CD4-positive, alpha-beta memory T cell (primary cell): ENCODE measurements at regions of chr3 and their contacts with region 1.

Region 1: GRCh38 chr3:153246806-153247205 is 84.8 kb downstream of the RAP2B start:
- DNase-seq: no peak
- H3K4me3 ChIP-seq: no peak overlapping the region
- H3K4me3 Mint-ChIP-seq: no peak overlapping the region
- H3K27ac ChIP-seq: no peak overlapping the region
- H3K27ac Mint-ChIP-seq: no peak overlapping the region
- H3K4me1 ChIP-seq: peaks cover 12% of the 10 kb centered on the region
- H3K4me1 Mint-ChIP-seq: peaks cover 19 to 46% (median 32%) of the 10 kb centered on the region in 4 donors
- H3K27me3 ChIP-seq: no peaks in the 10 kb centered on the region
- H3K27me3 Mint-ChIP-seq: no peaks in the 10 kb centered on the region

Region 2: DNA sequence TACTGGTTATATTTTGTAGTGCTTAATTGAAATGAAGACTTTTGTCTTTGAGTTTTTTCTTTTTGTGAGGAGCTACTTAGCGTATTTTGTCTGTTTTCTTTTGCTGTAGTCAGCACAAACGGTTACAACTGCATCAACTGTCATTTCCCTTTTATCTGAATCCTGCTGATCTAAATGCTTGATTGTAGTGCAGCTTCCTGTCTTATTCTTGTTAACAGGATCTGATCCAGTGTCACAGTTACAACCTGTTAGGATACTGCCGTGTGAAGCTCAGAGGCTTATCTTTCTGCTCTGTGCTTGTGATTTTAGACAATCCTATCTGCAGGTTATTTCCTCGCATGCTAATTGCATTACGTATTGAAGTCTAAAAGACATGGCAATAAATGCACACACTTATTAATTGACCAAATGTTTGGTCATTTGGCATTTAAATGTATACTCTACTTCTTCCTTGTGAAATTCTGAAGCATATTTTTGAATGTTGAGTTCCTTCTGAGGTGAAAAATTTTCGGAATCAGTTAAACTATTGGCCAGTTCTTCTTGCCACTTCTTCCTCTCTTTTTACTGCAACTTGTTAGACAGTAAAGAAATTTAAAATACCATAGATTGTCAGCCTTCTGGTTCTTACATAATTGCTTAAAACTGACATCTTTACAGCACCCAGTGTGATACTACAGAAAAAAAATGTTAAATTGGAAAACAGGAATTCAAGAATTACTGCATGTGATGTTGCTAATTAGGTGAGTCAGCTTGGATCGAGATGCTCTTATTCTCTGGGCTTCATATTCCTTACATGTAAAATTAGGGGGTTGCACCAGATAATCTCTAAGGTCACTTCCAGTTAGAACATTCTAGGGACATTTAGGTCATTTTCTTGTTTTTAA is 809.9 kb before region 1 on chr3:
- CTCF ChIA-PET with region 1: no interaction called
- POLR2A ChIA-PET with region 1: no interaction called
- intact Hi-C with region 1: no loop called
- DNase-seq: no peak
- H3K4me3 ChIP-seq: no peak overlapping the region
- H3K4me3 Mint-ChIP-seq: peak overlapping the region in 7 of 8 donors; percentile 12 to 82 (median 73)
- H3K27ac ChIP-seq: peak overlapping the region; percentile 32
- H3K27ac Mint-ChIP-seq: peak overlapping the region; percentile 42 to 89 (median 79)
- H3K4me1 ChIP-seq: peaks cover 77% of the 10 kb centered on the region
- H3K4me1 Mint-ChIP-seq: peaks cover 56 to 72% (median 64%) of the 10 kb centered on the region in 4 donors
- H3K27me3 ChIP-seq: no peaks in the 10 kb centered on the region
- H3K27me3 Mint-ChIP-seq: no peaks in the 10 kb centered on the region

Region 3: DNA sequence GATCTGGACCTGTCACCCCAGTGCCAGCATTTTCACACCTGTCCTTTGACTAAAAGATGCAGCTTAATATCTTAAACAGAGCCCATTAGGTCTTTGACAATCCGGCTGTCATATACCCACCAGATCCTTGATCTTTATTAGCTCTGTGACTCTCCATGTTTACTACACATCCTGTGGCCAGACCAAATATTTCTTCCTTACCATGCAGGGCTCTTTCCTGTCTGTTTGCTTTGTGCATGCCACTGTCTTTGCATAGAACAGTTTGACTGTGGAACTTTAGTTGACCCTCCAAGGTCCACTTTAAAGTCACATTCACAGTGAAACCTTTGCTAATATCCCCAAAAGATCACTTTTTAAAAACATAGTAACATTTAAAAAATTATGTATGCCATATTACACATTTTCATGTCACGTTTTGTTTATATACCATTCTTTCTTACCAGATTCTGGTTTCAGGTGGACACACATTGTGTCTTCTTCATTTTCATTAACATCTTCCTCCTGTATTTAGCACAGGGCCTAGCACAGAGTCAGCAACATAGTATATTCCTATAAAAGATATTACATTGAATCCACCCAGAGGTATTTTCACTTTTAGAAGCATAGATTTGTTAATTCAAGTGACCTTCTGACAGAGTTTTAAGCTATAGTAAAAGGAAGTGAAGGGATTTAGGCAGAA is 11.0 kb after region 1 on chr3:
- CTCF ChIA-PET with region 1: no interaction called
- POLR2A ChIA-PET with region 1: no interaction called
- intact Hi-C with region 1: no loop called
- DNase-seq: no peak
- H3K4me3 ChIP-seq: no peak overlapping the region
- H3K4me3 Mint-ChIP-seq: no peak overlapping the region
- H3K27ac ChIP-seq: no peak overlapping the region
- H3K27ac Mint-ChIP-seq: peak overlapping the region in 1 of 7 donors; percentile 17
- H3K4me1 ChIP-seq: no peaks in the 10 kb centered on the region
- H3K4me1 Mint-ChIP-seq: peaks cover 18 to 29% (median 24%) of the 10 kb centered on the region in 4 donors
- H3K27me3 ChIP-seq: no peaks in the 10 kb centered on the region
- H3K27me3 Mint-ChIP-seq: no peaks in the 10 kb centered on the region

Region 4: GRCh38 chr3:153284282-153284938 is 37.6 kb after region 1 on chr3:
- CTCF ChIA-PET with region 1: no interaction called
- POLR2A ChIA-PET with region 1: interaction called, 4 read pairs
- intact Hi-C with region 1: loop called (anchors 5 kb)
- DNase-seq: peak; percentile 42 to 59 (median 50)
- H3K4me3 ChIP-seq: no peak overlapping the region
- H3K4me3 Mint-ChIP-seq: peak overlapping the region in 7 of 8 donors; percentile 57 to 81 (median 65)
- H3K27ac ChIP-seq: peak overlapping the region; percentile 20
- H3K27ac Mint-ChIP-seq: peak overlapping the region; percentile 74 to 97 (median 91)
- H3K4me1 ChIP-seq: peaks cover 51% of the 10 kb centered on the region
- H3K4me1 Mint-ChIP-seq: peaks cover 34 to 49% (median 43%) of the 10 kb centered on the region in 4 donors
- H3K27me3 ChIP-seq: no peaks in the 10 kb centered on the region
- H3K27me3 Mint-ChIP-seq: no peaks in the 10 kb centered on the region

Region 5: GRCh38 chr3:153330901-153331300 is 84.1 kb after region 1 on chr3:
- CTCF ChIA-PET with region 1: no interaction called
- POLR2A ChIA-PET with region 1: no interaction called
- intact Hi-C with region 1: no loop called
- DNase-seq: no peak
- H3K4me3 ChIP-seq: no peak overlapping the region
- H3K4me3 Mint-ChIP-seq: no peak overlapping the region
- H3K27ac ChIP-seq: no peak overlapping the region
- H3K27ac Mint-ChIP-seq: no peak overlapping the region
- H3K4me1 ChIP-seq: no peaks in the 10 kb centered on the region
- H3K4me1 Mint-ChIP-seq: peaks cover 0 to 3% (median 0%) of the 10 kb centered on the region in 4 donors
- H3K27me3 ChIP-seq: no peaks in the 10 kb centered on the region
- H3K27me3 Mint-ChIP-seq: peaks cover 0 to 1% of the 10 kb centered on the region in 2 donors